GM10248 (cell line): ENCODE measurements at regions of chr2 and their contacts with region 1.

Region 1: GRCh38 chr2:152485954-152486736 is 151.2 kb downstream of the FMNL2 start:
- DNase-seq: no peak
- CTCF ChIP-seq: no peak

Region 2: DNA sequence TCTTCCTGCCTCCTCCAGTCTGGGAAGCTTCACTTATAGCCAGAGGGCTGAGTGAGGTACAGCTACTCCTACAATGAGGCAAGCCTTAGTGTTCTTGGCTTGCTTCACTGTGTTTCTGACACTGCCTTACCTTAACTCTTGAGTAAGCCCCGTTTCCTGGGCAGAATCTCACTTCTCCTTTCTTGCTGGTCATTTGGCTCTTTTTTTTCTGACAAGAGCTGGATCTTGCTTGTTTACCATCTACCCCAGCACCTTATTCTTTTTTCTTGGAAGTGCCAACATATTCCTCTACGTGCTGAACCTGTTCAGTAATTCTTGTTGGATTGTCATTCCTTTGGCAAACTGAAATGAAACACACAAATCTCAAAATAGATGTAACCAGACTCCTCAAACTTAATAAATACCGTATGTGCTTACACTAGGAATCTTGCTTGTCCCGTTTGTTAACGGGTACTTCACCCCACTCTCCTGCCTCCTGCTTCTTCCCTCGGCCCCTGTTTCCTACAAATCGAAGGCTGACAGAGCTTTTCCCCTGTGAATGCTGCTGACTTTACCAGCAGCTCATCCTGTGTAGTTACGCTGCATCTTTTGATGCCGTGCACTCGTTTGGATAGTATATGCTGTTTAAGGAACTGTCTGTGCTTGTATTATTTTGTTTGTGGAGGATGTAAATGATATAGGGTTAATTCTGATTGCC is 19.0 kb before region 1 on chr2:
- CTCF ChIA-PET with region 1: interaction called, 14 read pairs
- POLR2A ChIA-PET with region 1: no interaction called
- DNase-seq: peak; percentile 67
- CTCF ChIP-seq: no peak

Region 3: DNA sequence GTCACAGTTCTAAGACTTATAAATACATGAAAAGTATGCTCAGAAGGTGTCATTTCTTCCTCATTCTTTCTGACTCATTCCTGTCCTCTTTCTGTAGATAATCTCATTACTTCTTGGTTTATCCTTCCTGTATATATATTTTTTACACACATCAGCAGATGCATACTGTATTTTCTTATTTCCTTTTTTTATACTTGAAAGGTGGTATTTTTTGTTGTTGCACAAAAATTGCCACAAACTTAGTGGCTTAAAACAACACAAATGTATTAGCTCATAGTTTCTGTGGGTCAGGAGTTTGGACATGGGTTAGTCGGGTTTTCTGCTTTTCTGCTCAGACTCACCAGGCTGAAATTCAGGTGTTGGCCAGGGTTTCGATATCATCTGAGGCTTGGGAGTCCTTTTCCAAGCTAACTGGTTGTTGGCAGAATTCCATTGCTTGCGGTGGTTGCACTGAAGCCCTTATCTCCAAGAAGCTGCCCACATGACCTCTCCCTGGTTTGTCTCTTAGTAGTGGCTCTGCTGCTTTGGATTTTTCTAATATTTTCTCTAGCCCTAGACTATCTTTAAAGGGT is 11.4 kb after region 1 on chr2:
- CTCF ChIA-PET with region 1: interaction called, 11 read pairs
- POLR2A ChIA-PET with region 1: interaction called, 3 read pairs
- DNase-seq: peak; percentile 20
- CTCF ChIP-seq: no peak